Activated CD4-positive, alpha-beta memory T cell treated with anti-CD3 and anti-CD28 coated beads for 36 hours (primary cell): ENCODE measurements at regions of chr3 and their contacts with region 1.

Region 1: DNA sequence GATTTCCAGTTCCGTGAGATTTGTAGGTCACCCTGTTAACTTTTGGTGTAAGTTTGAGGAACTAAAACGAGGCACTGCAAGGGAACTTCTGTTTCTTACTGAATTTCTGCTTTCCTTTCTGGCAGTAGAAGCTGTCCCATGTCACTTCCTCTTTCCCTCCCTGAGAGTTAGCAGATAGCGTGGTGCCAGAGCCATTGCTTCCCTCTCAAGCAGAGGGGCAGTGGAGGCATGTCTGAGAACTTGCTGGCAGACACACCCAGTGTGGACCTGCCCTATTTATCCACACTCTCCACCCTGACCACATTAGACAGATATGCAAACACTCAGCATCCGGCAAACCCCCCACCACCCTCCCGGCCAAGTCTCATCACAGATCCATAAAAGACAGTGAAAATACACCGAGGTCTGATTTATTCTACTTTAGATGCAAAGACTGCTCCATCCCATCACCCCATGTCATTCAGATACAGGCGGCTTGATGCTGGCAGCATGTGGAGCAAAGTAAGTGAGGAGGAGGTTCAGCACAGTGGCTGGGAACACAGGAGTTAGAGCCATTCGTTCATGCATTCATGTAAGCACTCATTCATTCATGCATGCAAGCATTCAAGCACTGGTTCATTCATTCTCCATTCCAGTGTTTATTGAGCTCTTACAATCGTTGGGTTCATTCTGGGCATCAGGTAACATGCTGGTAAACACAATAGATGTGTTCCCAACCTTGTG is 324.7 kb downstream of the SHQ1 start:
- DNase-seq: no peak
- H3K4me3 Mint-ChIP-seq: no peak overlapping the region
- H3K27ac Mint-ChIP-seq: no peak overlapping the region
- H3K4me1 Mint-ChIP-seq: peaks cover 44% of the 10 kb centered on the region
- H3K27me3 Mint-ChIP-seq: peaks cover 3% of the 10 kb centered on the region

Region 2: GRCh38 chr3:72134989-72135451 is 388.6 kb before region 1 on chr3:
- CTCF ChIA-PET with region 1: no interaction called
- POLR2A ChIA-PET with region 1: no interaction called
- intact Hi-C with region 1: loop called (anchors 1 kb)
- DNase-seq: peak; percentile 25
- H3K4me3 Mint-ChIP-seq: peak overlapping the region; percentile 59
- H3K27ac Mint-ChIP-seq: peak overlapping the region; percentile 85
- H3K4me1 Mint-ChIP-seq: peaks cover 47% of the 10 kb centered on the region
- H3K27me3 Mint-ChIP-seq: no peaks in the 10 kb centered on the region

Region 3: DNA sequence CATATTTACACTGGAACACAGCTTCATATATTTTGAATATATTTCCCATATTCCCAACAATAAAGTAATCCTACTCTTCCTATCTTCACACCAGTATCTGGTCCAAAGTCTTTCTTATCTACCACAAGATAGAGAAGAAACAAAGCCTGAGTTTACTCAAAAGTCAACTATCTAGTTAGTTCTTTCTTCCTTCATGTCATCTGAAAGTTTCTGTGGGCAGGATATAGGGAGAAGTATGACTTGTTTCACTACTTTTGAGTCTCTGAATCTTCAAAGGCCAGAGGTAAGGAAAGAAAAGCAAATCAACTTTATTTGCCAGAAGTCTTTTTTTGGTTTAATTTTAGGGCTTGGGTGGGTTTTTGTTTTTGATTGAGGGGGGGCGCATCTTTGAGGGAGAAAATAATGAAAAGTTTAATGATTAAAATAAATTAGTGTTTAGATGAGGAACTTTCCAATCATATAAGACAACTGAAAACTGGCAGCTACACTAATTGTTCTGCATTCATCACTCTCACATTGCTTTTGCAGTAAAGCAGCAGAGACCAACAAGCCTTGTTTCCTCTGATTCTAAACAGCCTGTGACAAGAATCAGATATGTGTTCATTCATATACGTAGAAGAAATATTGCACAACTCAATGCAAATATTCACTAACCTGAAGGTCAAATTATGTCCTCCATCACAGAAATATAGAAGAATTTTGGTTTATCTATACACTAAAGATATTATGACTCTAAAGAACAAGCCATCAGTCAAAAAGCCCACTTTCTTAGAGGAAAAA is 96.8 kb before region 1 on chr3:
- CTCF ChIA-PET with region 1: no interaction called
- POLR2A ChIA-PET with region 1: interaction called, 4 read pairs
- intact Hi-C with region 1: loop called (anchors 5 kb)
- DNase-seq: no peak
- H3K4me3 Mint-ChIP-seq: peak overlapping the region; percentile 23
- H3K27ac Mint-ChIP-seq: peak overlapping the region; percentile 82
- H3K4me1 Mint-ChIP-seq: peaks cover 78% of the 10 kb centered on the region
- H3K27me3 Mint-ChIP-seq: no peaks in the 10 kb centered on the region

Region 4: DNA sequence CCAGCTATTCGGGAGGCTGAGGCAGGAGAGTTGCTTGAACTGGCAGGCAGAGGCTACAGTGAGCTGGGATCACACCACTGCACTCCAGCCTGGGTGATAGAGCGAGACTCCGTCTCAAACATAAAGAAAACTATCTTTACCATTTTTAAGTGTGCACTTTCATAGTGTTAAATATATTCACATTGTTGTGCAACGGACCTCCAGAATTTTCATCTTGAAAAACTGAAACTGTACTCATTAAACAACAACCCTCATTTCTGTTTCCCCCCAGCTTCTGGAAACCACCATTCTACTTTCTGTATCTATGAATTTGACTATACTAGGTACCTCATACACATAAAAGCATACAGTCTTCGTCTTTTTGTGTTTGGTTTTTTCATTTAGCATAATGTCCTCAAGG is 50.4 kb before region 1 on chr3:
- CTCF ChIA-PET with region 1: no interaction called
- POLR2A ChIA-PET with region 1: interaction called, 8 read pairs
- intact Hi-C with region 1: loop called (anchors 1 kb)
- DNase-seq: no peak
- H3K4me3 Mint-ChIP-seq: no peak overlapping the region
- H3K27ac Mint-ChIP-seq: peak overlapping the region; percentile 61
- H3K4me1 Mint-ChIP-seq: peaks cover 40% of the 10 kb centered on the region
- H3K27me3 Mint-ChIP-seq: peaks cover 2% of the 10 kb centered on the region

Region 5: DNA sequence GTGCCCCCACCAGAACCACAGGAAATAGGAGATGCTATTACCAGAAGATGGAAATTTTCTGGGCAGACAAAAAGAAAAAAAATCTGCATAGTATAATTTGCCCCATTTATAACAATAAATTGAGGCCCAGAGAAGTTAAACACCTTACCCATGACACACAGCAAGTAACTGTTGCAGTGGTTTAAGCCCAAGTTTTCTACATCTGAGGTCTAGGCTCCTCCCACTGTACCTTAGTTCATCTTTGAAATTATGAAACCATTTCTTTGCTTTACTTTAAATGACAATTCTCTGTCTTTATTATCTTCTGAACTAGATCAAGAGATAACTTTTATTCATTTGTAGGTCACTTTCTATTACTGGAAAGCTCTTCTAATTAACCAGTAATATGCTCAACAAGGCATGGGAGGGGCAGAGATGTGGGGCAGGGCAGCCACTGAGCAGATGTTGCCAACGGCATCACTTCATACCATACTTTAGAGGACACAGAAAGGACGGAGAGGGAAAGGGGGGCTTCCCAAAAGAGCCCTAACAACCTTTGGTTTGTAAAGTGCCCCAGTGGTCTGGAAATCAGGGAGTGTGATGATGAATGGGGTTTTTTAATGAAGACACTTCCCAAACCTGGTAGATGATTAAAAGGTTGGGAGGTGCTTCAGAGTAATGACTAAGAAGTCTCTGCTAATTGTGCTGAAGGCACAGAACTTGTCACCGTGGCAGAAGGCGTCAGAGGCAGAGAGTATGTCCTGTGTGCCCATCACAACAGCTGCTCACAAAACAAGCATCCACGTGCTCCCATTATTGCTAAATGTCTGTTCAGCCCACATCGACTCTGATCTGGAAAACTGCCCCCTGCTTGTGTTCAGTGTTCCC is 17.8 kb before region 1 on chr3:
- CTCF ChIA-PET with region 1: no interaction called
- POLR2A ChIA-PET with region 1: no interaction called
- intact Hi-C with region 1: no loop called
- DNase-seq: peak; percentile 40
- H3K4me3 Mint-ChIP-seq: no peak overlapping the region
- H3K27ac Mint-ChIP-seq: peak overlapping the region; percentile 7
- H3K4me1 Mint-ChIP-seq: peaks cover 19% of the 10 kb centered on the region
- H3K27me3 Mint-ChIP-seq: no peaks in the 10 kb centered on the region

Region 6: GRCh38 chr3:72629191-72629631 is 105.6 kb after region 1 on chr3:
- CTCF ChIA-PET with region 1: no interaction called
- POLR2A ChIA-PET with region 1: interaction called, 3 read pairs
- intact Hi-C with region 1: loop called (anchors 1 kb)
- DNase-seq: no peak
- H3K4me3 Mint-ChIP-seq: peak overlapping the region; percentile 4
- H3K27ac Mint-ChIP-seq: peak overlapping the region; percentile 74
- H3K4me1 Mint-ChIP-seq: peaks cover 60% of the 10 kb centered on the region
- H3K27me3 Mint-ChIP-seq: no peaks in the 10 kb centered on the region